Left lung (tissue), 14 donors: ENCODE measurements at regions of chr22 and their contacts with region 1.

Region 1: GRCh38 chr22:37199103-37199759 is 11.2 kb upstream of the C1QTNF6 start:
- DNase-seq: peak; percentile 96 to 99 (median 98)
- ATAC-seq: peak; percentile 89
- H3K4me3 ChIP-seq: peak overlapping the region; percentile 44 to 55
- H3K27ac ChIP-seq: peak overlapping the region; percentile 89 to 95
- H3K4me1 ChIP-seq: peaks cover 33 to 36% of the 10 kb centered on the region in 2 donors
- H3K27me3 ChIP-seq: no peaks in the 10 kb centered on the region
- CTCF ChIP-seq: peak; percentile 92 to 97

Region 2: DNA sequence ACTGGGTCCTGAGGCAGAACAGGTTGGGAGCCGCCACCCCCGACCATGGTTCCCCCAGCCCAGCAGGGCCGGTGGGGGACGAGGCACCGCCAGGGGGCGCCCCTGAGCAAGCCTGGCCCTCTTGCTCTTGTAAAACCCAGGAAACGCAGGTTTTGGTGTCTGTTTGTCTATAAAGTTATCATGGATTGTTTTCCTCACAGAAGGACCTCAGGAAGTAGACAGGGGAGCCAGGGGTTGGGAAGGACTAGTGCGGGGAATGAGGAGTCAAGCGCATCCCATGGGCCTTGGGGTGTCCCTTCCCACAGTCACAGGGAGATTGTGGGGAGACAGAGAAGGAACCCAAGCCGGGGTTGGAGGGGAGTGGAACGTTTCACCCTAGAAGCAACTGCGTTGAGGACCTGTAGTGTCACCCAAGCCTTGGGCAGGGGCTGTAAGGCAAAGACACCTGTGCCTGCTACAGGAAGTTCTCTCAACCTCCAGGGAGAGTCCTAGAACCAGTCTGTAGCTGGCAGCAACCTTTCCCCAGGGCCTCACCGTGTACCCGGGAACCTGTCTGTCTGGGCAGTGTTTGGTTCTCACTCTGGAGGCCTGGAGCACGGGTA is 121.2 kb before region 1 on chr22:
- intact Hi-C with region 1: loop called in 1 of 2 experiments (anchors 10 kb)
- DNase-seq: peak in 3 of 4 donors; percentile 58 to 95 (median 64)
- ATAC-seq: peak; percentile 78
- H3K4me3 ChIP-seq: no peak overlapping the region
- H3K27ac ChIP-seq: no peak overlapping the region
- H3K4me1 ChIP-seq: peaks cover 0 to 6% of the 10 kb centered on the region in 2 donors
- H3K27me3 ChIP-seq: peaks cover 0 to 46% of the 10 kb centered on the region in 2 donors
- CTCF ChIP-seq: peak; percentile 94 to 98

Region 3: GRCh38 chr22:37154925-37155712 is 44.1 kb before region 1 on chr22:
- intact Hi-C with region 1: no loop called
- DNase-seq: peak in 1 of 4 donors; percentile 34
- ATAC-seq: no peak
- H3K4me3 ChIP-seq: no peak overlapping the region
- H3K27ac ChIP-seq: no peak overlapping the region
- H3K4me1 ChIP-seq: peaks cover 0 to 3% of the 10 kb centered on the region in 2 donors
- H3K27me3 ChIP-seq: no peaks in the 10 kb centered on the region
- CTCF ChIP-seq: no peak

Region 4: GRCh38 chr22:37166675-37167066 is 32.6 kb before region 1 on chr22:
- intact Hi-C with region 1: loop called in 1 of 2 experiments (anchors 2 kb)
- DNase-seq: peak; percentile 71 to 96 (median 87)
- ATAC-seq: peak; percentile 98
- H3K4me3 ChIP-seq: no peak overlapping the region
- H3K27ac ChIP-seq: peak overlapping the region in 1 of 2 donors; percentile 40
- H3K4me1 ChIP-seq: peaks cover 5 to 15% of the 10 kb centered on the region in 2 donors
- H3K27me3 ChIP-seq: no peaks in the 10 kb centered on the region
- CTCF ChIP-seq: peak; percentile 86 to 87